A673 (cell line): ENCODE measurements at regions of chr2 and their contacts with region 1.

Region 1: DNA sequence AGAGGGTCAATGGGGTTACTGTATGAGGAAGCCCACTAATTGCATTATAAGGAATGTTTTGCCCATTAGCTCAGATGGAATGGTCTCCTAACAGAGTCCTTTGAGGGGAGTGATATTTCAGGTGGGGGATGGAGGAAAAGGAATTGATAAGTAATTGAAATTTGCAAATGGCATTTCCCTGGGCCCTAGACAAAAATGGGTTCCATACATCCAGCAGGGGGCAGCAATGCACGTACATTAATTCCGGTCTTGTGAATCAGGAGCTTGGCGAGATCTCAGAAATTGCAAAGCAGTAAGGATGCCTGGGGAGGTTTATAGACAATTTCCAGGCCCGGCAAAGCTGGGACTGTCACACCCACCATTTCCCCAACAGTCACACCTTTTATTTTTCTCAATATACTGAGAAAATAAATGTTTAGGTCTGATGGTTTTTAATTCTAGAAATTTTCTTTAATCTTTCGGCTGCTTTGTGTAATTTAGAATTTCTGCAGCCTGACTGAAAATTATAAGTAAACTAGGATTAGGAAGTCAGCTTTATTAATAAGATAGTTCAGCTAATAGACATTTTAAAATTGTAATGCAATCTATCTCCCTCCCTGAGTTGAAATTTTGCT is 122.8 kb downstream of the LYPD1 start:
- DNase-seq: peak; percentile 88
- H3K4me3 ChIP-seq: no peak overlapping the region
- H3K27ac ChIP-seq: no peak overlapping the region
- H3K4me1 ChIP-seq: peaks cover 14% of the 10 kb centered on the region
- H3K27me3 ChIP-seq: no peaks in the 10 kb centered on the region
- CTCF ChIP-seq: peak; percentile 82

Region 2: GRCh38 chr2:133641497-133641896 is 1094.3 kb after region 1 on chr2:
- CTCF ChIA-PET with region 1: interaction called, 11 read pairs
- POLR2A ChIA-PET with region 1: no interaction called
- intact Hi-C with region 1: no loop called
- DNase-seq: peak; percentile 62
- H3K4me3 ChIP-seq: no peak overlapping the region
- H3K27ac ChIP-seq: no peak overlapping the region
- H3K4me1 ChIP-seq: peaks cover 14% of the 10 kb centered on the region
- H3K27me3 ChIP-seq: no peaks in the 10 kb centered on the region
- CTCF ChIP-seq: peak; percentile 58